HepG2 (cell line): ENCODE measurements at regions of chr1 and their contacts with region 1.

Region 1: GRCh38 chr1:91929250-91929649 is 20.0 kb upstream of the BRDT start:
- DNase-seq: peak; percentile 4
- ATAC-seq: peak; percentile 79
- H3K4me3 ChIP-seq: no peak overlapping the region; a peak in 1 of 6 replicates
- H3K27ac ChIP-seq: no peak overlapping the region
- H3K4me1 ChIP-seq: peaks cover 21% of the 10 kb centered on the region
- H3K27me3 ChIP-seq: no peaks in the 10 kb centered on the region
- CTCF ChIP-seq: no peak
- EP300 ChIP-seq: no peak
- POLR2A ChIP-seq: no peak
- RAD21 ChIP-seq: no peak

Region 2: GRCh38 chr1:91511386-91511785 is 417.9 kb before region 1 on chr1:
- CTCF ChIA-PET with region 1: interaction called, 15 read pairs
- POLR2A ChIA-PET with region 1: no interaction called
- in situ Hi-C with region 1: loop called (anchors 5 kb)
- intact Hi-C with region 1: loop called (anchors 1 kb)
- DNase-seq: peak; percentile 35
- ATAC-seq: no peak
- H3K4me3 ChIP-seq: no peak overlapping the region
- H3K27ac ChIP-seq: no peak overlapping the region
- H3K4me1 ChIP-seq: no peaks in the 10 kb centered on the region
- H3K27me3 ChIP-seq: no peaks in the 10 kb centered on the region
- CTCF ChIP-seq: peak; percentile 52
- EP300 ChIP-seq: no peak
- POLR2A ChIP-seq: no peak
- RAD21 ChIP-seq: no peak

Region 3: DNA sequence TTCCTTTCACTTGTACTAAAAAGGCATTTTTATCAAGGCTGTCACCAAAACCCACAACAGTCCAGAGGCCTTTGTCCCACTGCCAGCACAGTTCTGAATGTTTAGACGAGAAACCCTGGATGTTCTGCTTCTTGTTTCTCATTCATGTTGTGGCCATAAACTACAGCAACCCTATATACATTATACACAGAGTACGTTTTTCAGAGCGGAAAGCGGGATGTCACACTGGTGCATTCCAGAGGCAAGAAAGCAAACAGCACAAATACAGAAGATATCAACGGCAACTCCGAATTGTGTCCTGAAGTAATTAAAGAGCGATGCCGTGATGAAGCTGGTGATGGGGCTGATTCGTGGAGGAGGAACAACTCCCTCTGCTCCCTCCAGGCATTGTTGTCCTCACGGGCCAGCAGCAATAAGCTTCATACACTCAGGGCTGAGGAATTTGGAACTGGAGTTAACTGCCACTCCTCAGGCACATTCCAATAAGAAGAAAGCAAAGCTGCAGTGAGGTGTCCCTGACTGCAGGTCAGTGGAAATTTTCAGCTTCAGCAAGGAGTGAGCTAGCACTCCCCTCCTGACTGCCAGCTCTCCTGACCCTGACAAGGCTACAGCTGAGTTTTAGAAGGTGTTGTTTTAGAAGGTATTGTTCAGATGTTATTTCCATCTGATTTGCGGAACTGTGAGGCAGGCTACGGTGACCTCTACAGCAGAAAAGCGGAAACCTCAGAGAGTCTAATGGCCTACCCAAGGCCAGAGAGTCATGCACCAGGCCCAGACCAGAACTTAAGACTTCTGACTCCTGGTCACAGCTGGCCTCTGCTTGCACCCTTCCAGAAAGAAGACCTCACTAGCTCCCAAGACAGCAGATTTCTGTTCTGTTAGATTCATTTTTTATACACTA is 192.3 kb before region 1 on chr1:
- CTCF ChIA-PET with region 1: no interaction called
- POLR2A ChIA-PET with region 1: no interaction called
- in situ Hi-C with region 1: no loop called
- intact Hi-C with region 1: loop called (anchors 5 kb)
- DNase-seq: peak; percentile 87
- ATAC-seq: peak; percentile 90
- H3K4me3 ChIP-seq: no peak overlapping the region; a peak in 1 of 6 replicates
- H3K27ac ChIP-seq: peak overlapping the region; percentile 74
- H3K4me1 ChIP-seq: peaks cover 49% of the 10 kb centered on the region
- H3K27me3 ChIP-seq: no peaks in the 10 kb centered on the region
- CTCF ChIP-seq: no peak
- EP300 ChIP-seq: 0 out of 4 replicates have a peak, but pooled peaks of 1 of the 2 experiments have one; percentile 34
- POLR2A ChIP-seq: 0 out of 4 replicates have a peak, but pooled peaks of 1 of the 2 experiments have one; percentile 19
- RAD21 ChIP-seq: no peak